ENCODE measurements at regions of chr16 and their contacts with region 1.

Region 1: DNA sequence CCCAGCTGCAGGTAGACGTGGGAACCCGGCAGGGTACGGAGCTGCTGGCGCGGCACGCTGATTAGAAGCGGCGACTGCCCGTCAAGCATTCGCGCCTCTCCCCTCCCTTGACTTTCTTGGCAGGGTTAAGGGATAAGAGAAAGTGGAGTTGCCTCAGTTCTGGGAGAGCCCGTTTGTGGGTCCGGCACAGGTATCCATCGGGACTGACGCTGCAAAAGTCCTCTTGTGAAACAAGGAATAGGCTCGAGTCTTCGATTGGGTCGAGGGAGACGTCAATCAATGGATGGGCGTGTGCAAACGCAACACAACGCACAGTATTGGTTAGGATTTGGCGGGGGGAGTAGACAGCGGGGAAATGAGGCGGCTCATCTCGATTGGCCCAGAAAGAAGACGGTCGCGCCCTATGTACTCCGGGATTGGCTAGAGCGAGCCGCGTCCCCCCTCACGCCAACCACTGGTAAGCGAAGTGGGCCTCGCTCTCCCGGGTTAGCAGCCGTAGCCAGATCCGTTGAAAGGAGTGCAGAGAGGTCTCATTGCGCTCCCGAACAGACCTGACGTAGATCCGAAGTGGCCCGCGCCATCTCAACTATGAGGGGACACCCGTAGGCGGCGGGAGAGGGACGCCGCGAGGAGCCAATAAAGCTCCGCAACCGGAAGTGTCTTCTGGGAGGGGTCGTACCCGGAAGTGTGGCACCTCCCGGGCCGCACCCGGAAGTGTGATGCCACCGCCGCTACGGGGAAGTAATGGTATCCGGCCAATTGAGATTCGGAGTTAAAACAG is at the start of gene MON1B:
- DNase-seq: peak; percentile 96
- CTCF ChIP-seq: no peak

Region 2: GRCh38 chr16:75464130-75464918 is 1726.3 kb before region 1 on chr16 and contains the start of gene TMEM170A:
- in situ Hi-C with region 1: loop called (anchors 25 kb)
- DNase-seq: peak; percentile 97
- CTCF ChIP-seq: peak; percentile 99

Region 3: DNA sequence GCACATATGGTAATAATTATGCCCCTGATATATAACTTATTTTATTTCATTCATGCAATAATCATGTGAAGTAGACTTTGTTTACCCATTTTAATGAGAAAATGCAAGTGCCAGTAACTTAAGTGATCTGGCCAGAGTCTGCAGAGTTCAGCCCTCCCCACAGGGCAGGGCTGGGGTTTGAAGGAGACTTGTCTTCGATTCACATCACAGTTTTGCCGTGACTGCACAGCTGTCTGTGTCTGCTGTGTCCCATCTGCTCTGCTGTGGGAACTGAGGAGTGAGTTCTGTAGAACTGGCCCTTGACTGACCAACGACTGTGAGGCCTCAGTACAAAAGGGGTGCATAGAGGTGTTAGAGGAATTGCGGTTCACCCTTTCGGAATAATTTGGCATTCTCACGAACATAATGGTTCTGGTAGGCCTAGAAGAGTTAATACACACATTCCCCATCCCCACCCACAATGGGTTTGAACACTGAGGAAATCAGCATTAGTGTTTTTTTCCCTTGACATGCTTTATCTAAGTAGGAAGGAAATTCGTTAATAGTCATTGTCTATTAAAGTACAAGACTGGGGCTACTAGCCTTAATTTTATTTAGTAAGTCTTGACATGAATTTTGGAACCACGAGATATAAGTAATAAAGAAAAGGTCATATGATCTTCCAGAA is 113.3 kb before region 1 on chr16:
- in situ Hi-C with region 1: no loop called
- DNase-seq: no peak
- CTCF ChIP-seq: no peak

Measured in GM13976 (cell line).